ENCODE measurements at regions of chr20 and their contacts with region 1.

Region 1: DNA sequence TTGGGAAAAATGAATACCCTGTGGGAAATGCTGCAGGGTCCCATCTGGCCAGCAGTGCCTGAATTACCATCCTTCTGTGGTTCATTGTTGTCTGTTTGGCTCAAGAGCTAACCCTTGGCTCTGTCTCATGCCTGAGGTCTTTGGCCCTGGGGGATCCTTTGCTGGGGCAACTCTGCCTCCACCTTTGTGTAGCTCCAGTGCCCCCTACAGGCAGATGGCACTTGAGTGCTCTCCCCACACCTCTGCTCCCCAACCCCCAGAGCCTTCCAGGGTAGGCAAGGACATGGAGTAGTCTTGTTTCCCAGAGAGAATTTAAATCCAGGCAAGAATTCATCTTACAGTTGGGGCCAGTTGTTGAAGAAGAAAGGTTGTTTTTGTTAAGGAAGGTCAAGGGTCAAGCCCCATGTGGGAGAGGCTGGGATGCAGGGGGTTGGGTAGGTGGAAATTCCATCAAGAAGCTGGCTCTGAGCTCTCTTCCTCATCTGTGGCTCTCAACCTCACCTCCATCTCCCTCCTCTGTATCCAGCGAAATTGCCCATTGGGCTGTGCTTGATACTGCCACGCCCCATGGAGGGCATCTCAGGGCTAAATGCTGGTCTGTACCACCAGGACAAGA is 44.2 kb downstream of the ZNF831 start:
- DNase-seq: peak; percentile 86
- H3K4me3 Mint-ChIP-seq: no peak overlapping the region
- H3K27ac Mint-ChIP-seq: peak overlapping the region; percentile 64
- H3K4me1 Mint-ChIP-seq: peaks cover 22% of the 10 kb centered on the region
- H3K27me3 Mint-ChIP-seq: no peaks in the 10 kb centered on the region

Region 2: GRCh38 chr20:59042796-59043660 is 164.8 kb before region 1 on chr20:
- CTCF ChIA-PET with region 1: interaction called, 11 read pairs
- POLR2A ChIA-PET with region 1: no interaction called
- intact Hi-C with region 1: no loop called
- DNase-seq: peak; percentile 96
- H3K4me3 Mint-ChIP-seq: peak overlapping the region; percentile 92
- H3K27ac Mint-ChIP-seq: peak overlapping the region; percentile 88
- H3K4me1 Mint-ChIP-seq: peaks cover 55% of the 10 kb centered on the region
- H3K27me3 Mint-ChIP-seq: no peaks in the 10 kb centered on the region

Region 3: GRCh38 chr20:59094576-59094975 is 113.3 kb before region 1 on chr20:
- CTCF ChIA-PET with region 1: interaction called, 302 read pairs
- POLR2A ChIA-PET with region 1: interaction called, 6 read pairs
- intact Hi-C with region 1: no loop called
- DNase-seq: no peak
- H3K4me3 Mint-ChIP-seq: no peak overlapping the region
- H3K27ac Mint-ChIP-seq: no peak overlapping the region
- H3K4me1 Mint-ChIP-seq: no peaks in the 10 kb centered on the region
- H3K27me3 Mint-ChIP-seq: no peaks in the 10 kb centered on the region

Region 4: DNA sequence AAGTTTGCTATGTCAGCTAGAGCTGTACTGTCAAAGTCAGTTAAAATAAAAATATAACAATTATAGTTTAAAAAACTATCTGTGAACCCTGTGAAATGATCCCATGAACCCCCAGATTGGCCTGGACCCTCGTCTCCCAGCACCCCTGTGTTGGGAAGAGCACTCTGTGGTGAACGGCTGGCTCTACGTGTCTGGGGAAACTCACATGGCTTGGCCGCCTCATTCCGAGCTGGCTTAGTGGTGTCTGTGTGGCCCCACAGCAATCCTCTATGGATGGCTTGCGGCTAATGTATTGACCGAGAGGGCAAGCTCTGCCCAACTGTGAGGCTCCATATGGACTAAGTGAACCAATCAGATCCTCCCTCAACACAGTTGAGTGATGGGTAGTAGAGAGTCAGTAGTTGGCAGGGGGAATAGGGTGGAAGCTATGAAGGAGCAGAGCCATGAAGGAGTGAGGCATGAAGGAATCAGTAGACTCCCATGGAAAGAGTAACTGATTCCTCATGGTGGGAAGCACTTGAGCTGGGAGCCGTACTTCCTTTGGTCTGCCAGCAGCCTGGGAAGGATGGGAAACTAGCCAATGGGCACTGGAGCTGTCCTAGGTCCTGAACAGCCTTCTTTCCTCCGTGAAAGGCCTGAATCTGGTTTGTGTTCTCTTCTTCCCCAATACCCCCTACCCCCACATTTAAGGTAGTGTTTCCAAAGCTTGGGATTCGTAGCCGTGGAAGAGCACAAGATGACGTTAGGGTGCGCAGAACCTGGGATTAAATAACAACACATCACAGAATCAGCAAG is 65.9 kb before region 1 on chr20:
- CTCF ChIA-PET with region 1: interaction called, 17 read pairs
- POLR2A ChIA-PET with region 1: no interaction called
- intact Hi-C with region 1: no loop called
- DNase-seq: no peak
- H3K4me3 Mint-ChIP-seq: no peak overlapping the region
- H3K27ac Mint-ChIP-seq: no peak overlapping the region
- H3K4me1 Mint-ChIP-seq: peaks cover 34% of the 10 kb centered on the region
- H3K27me3 Mint-ChIP-seq: no peaks in the 10 kb centered on the region

Region 5: DNA sequence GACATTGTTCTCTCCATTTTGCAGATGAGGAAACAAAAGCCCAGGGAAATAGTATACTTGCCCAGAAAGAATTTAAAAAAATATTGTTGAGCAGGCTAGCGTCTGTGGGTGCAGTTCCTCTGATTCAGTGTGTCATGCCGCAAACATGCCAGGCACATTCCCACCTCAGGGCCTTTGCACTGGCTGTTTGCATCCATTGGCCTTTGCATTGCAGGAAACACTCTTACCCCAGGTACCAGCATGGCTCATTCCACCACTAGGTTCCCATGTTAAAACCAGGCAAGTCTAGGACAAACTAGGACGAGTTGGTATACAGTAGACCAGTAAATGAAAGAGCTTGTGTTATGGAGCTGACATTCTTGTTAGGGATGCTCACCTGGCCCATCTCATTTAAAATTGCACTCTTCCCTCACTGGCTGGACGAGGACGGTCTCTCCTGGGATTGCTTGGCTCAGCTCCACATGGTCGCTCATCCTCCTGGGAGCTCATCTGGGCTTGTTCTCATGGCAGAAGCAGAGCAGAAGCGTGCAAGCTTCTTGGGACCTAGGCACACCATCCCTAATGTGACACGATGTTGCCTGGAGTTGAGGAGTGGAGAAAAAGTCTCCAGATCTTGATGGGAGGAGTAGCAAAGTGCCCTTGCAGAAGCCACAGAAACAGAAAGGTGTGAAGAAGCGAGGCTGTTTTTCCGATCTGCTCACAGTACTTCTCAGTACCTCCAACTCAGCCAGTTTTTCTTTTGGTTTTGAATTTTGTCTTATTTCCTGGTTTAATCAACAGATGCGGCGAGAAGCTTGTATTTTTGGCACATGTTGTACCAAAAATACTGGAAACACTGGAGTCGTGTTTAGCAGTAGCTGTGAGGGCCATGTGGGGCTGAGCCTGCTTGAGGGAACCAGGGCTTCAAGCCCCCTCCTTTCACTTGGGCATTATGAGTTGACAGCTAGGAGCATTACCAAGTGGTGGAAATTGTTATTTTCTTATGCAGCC is 30.3 kb before region 1 on chr20:
- CTCF ChIA-PET with region 1: interaction called, 23 read pairs
- POLR2A ChIA-PET with region 1: interaction called, 3 read pairs
- intact Hi-C with region 1: no loop called
- DNase-seq: peak; percentile 63
- H3K4me3 Mint-ChIP-seq: peak overlapping the region; percentile 67
- H3K27ac Mint-ChIP-seq: peak overlapping the region; percentile 93
- H3K4me1 Mint-ChIP-seq: peaks cover 84% of the 10 kb centered on the region
- H3K27me3 Mint-ChIP-seq: no peaks in the 10 kb centered on the region